Body of pancreas (tissue), 4 donors: ENCODE measurements at regions of chr9 and their contacts with region 1.

Region 1: GRCh38 chr9:34899535-34900158 is 58.4 kb upstream of the PHF24 start:
- DNase-seq: peak; percentile 73 to 84 (median 78)
- ATAC-seq: peak; percentile 92
- H3K4me3 ChIP-seq: no peak overlapping the region
- H3K27ac ChIP-seq: no peak overlapping the region
- H3K4me1 ChIP-seq: no peaks in the 10 kb centered on the region
- H3K27me3 ChIP-seq: peaks cover 0 to 3% of the 10 kb centered on the region in 2 donors
- CTCF ChIP-seq: peak; percentile 50 to 86 (median 83)
- POLR2A ChIP-seq: no peak

Region 2: DNA sequence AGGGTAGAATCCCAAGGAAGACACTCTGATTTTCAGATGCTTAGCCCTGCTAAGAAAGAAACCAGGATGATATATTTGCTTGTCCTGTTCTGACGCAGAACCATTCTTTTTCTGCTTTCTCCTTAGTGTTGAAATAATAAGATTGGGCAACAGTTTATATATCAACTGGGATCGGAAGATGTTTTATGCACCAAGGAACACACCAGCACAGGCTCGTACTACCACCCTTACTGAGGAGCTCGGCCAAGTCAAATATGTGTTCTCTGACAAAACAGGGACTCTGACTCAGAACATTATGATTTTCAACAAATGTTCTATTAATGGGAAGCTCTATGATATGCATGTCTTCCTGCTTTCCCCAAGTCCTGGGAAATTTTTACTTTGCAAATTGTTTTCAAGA is 571.2 kb after region 1 on chr9:
- intact Hi-C with region 1: loop called (anchors 10 kb)
- DNase-seq: peak in 2 of 4 donors; percentile 32 to 72
- ATAC-seq: peak; percentile 59
- H3K4me3 ChIP-seq: no peak overlapping the region
- H3K27ac ChIP-seq: peak overlapping the region in 2 of 4 donors; percentile 2 to 66
- H3K4me1 ChIP-seq: no peaks in the 10 kb centered on the region
- H3K27me3 ChIP-seq: no peaks in the 10 kb centered on the region
- CTCF ChIP-seq: no peak
- POLR2A ChIP-seq: no peak